CD4-positive, alpha-beta memory T cell (primary cell): ENCODE measurements at regions of chrX and their contacts with region 1.

Region 1: DNA sequence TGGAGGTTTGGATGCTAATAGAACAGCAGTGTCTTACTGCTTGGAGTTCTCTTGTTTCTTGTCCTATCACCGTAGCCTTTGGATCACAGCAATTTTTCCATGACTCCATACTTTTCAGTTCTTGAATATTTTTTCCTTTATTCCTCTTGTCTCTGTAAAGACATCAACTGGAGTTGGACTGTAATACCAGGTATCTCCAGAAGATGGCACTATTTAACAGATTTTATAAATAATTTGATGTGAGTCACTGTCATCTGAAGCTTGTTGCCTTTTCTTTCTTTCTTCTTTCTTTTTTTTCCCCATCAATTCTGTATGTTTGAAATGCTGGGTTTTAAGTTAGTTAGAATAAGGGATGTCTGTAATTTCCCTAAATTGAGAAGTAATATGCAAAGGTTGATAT is 24.1 kb downstream of the HPRT1 start:
- DNase-seq: peak in 4 of 5 donors; percentile 26 to 36 (median 31)
- H3K4me3 ChIP-seq: no peak overlapping the region
- H3K4me3 Mint-ChIP-seq: no peak overlapping the region
- H3K27ac ChIP-seq: no peak overlapping the region
- H3K27ac Mint-ChIP-seq: no peak overlapping the region
- H3K4me1 ChIP-seq: no peaks in the 10 kb centered on the region
- H3K4me1 Mint-ChIP-seq: no peaks in the 10 kb centered on the region
- H3K27me3 ChIP-seq: no peaks in the 10 kb centered on the region
- H3K27me3 Mint-ChIP-seq: no peaks in the 10 kb centered on the region

Region 2: DNA sequence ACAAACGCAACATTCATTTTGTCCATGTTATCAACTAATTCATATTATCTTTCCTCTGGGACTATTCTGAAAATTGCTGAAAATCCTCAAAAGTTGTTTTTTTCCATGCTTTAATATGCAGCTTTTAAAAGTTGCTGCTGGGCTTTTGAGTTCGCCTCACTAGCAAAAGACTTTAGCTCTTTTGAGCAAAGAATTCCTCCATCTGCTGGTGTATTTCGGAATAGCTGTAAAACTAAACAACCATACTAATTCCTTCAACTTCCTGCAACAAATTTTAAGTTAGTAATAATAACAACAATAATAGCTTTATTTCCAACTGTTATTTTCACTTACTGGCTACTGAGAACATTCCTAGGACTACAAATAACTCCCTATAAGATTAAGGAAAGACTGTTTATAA is 298.8 kb after region 1 on chrX:
- CTCF ChIA-PET with region 1: interaction called, 10 read pairs
- POLR2A ChIA-PET with region 1: no interaction called
- intact Hi-C with region 1: no loop called
- DNase-seq: peak in 1 of 5 donors; percentile 8
- H3K4me3 ChIP-seq: no peak overlapping the region
- H3K4me3 Mint-ChIP-seq: no peak overlapping the region
- H3K27ac ChIP-seq: no peak overlapping the region
- H3K27ac Mint-ChIP-seq: no peak overlapping the region
- H3K4me1 ChIP-seq: no peaks in the 10 kb centered on the region
- H3K4me1 Mint-ChIP-seq: no peaks in the 10 kb centered on the region
- H3K27me3 ChIP-seq: no peaks in the 10 kb centered on the region
- H3K27me3 Mint-ChIP-seq: no peaks in the 10 kb centered on the region

Region 3: GRCh38 chrX:135015523-135016245 is 531.6 kb after region 1 on chrX:
- CTCF ChIA-PET with region 1: no interaction called
- POLR2A ChIA-PET with region 1: no interaction called
- intact Hi-C with region 1: no loop called
- DNase-seq: no peak
- H3K4me3 ChIP-seq: no peak overlapping the region
- H3K4me3 Mint-ChIP-seq: no peak overlapping the region
- H3K27ac ChIP-seq: no peak overlapping the region
- H3K27ac Mint-ChIP-seq: no peak overlapping the region
- H3K4me1 ChIP-seq: no peaks in the 10 kb centered on the region
- H3K4me1 Mint-ChIP-seq: no peaks in the 10 kb centered on the region
- H3K27me3 ChIP-seq: no peaks in the 10 kb centered on the region
- H3K27me3 Mint-ChIP-seq: no peaks in the 10 kb centered on the region

Region 4: DNA sequence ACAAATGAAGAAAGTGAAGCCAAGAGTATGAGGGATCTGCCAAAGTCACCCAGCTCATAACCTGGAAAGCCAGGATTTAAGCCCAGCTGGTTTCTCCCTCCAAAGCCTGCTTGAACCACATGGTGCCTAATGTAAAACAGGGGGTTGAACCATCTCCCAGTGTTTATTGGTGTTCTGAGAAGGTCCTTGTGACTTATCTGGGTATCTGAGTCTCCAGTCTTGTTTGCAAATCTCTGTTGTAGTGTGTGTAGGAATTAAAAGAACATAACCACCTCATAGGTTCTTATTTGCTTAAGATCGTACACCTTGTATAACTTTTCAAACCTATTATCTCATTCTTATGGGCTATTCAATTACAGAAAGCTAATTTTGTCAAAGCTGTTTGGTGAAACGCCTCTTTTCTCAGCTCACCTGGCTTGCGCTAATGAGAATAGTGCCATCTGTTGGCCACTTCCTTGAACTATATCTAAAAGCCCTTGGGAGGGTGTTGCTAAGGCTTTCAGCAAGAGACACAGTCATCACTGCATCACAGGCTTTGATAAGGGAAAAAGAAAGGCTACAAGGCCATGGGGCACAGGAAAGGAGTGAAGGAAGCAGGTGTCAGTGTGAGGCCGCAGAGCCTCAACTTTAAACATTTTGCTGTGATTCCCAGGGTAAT is 602.3 kb after region 1 on chrX:
- CTCF ChIA-PET with region 1: interaction called, 3 read pairs
- POLR2A ChIA-PET with region 1: no interaction called
- intact Hi-C with region 1: loop called (anchors 5 kb)
- DNase-seq: peak; percentile 56 to 67 (median 62)
- H3K4me3 ChIP-seq: no peak overlapping the region
- H3K4me3 Mint-ChIP-seq: no peak overlapping the region
- H3K27ac ChIP-seq: no peak overlapping the region
- H3K27ac Mint-ChIP-seq: peak overlapping the region in 5 of 7 donors; percentile 1 to 78 (median 15)
- H3K4me1 ChIP-seq: no peaks in the 10 kb centered on the region
- H3K4me1 Mint-ChIP-seq: peaks cover 1 to 6% (median 5%) of the 10 kb centered on the region in 4 donors
- H3K27me3 ChIP-seq: no peaks in the 10 kb centered on the region
- H3K27me3 Mint-ChIP-seq: peaks cover 0 to 5% of the 10 kb centered on the region in 2 donors